IMR-90 (cell line): ENCODE measurements at regions of chr12 and their contacts with region 1.

Region 1: DNA sequence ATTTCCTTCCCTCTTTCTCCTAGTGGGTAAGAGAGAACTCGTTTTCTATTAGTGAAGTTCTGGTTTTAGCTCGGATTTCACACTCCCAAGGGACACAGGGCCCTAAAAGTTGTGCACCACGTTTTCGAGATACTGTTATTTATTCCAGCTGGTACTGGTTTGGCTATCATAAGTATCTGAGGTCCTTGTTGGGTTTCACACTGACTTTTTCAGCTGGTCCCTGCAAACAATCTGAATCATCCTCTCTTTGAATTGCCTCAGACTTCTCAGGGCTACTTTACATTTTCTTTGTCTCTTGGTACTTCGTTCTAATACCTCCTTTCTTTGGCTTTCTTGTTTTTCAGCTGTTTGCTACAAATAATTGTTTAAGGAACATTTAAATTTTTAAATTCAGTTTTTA is 75.7 kb downstream of the SCN8A start:
- DNase-seq: peak; percentile 6
- ATAC-seq: no peak
- H3K4me3 ChIP-seq: no peak overlapping the region
- H3K27ac ChIP-seq: no peak overlapping the region
- H3K4me1 ChIP-seq: no peaks in the 10 kb centered on the region; the same call in none of the 2 replicates
- H3K27me3 ChIP-seq: no peaks in the 10 kb centered on the region
- CTCF ChIP-seq: no peak
- POLR2A ChIP-seq: no peak
- RAD21 ChIP-seq: no peak

Region 2: DNA sequence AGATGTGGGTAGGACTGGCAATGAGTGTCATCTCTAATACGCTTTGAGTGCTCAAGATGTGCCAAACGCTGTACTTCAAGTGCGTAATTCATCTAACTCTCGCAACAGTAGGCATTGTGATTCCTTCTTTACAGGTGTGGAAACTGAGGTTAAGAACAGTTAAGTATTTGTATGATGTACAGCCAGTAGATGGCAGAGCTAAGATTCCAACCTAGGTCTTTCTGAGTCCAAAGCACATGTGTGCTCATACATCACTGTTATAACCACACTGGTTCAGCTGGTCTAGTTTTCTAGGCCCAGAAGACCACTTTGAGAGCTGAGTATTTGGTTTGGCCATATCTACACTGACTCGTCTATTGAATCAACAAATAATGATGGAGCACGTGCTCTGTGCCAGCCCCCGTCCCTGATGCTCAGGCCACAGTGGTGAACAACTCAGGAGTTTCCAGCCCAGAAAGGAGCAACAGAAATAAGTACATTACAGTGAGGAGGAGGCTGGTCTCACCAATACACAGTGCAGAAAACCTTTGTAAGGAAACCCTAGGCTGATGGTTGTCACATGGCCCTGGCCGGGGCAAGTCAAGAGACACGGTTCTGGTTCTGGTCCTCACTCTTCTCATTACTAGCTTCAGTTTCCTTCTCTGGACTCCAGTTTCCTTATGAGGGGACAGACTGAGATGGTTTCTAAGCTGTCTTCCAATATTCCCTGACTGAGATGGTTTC is 145.0 kb before region 1 on chr12:
- CTCF ChIA-PET with region 1: no interaction called
- POLR2A ChIA-PET with region 1: no interaction called
- dilution Hi-C with region 1: no loop called
- in situ Hi-C with region 1: no loop called
- intact Hi-C with region 1: no loop called
- DNase-seq: peak; percentile 29
- ATAC-seq: no peak
- H3K4me3 ChIP-seq: no peak overlapping the region
- H3K27ac ChIP-seq: no peak overlapping the region
- H3K4me1 ChIP-seq: no peaks in the 10 kb centered on the region
- H3K27me3 ChIP-seq: peaks cover 2% of the 10 kb centered on the region; the same call in 1 of the 2 replicates
- CTCF ChIP-seq: 0 out of 2 replicates have a peak, but pooled peaks have one; percentile 30
- POLR2A ChIP-seq: no peak
- RAD21 ChIP-seq: no peak

Region 3: GRCh38 chr12:51631591-51631990 is 35.1 kb before region 1 on chr12:
- CTCF ChIA-PET with region 1: no interaction called
- POLR2A ChIA-PET with region 1: no interaction called
- dilution Hi-C with region 1: no loop called
- in situ Hi-C with region 1: no loop called
- intact Hi-C with region 1: loop called (anchors 5 kb)
- DNase-seq: peak; percentile 82
- ATAC-seq: peak; percentile 93
- H3K4me3 ChIP-seq: no peak overlapping the region
- H3K27ac ChIP-seq: no peak overlapping the region
- H3K4me1 ChIP-seq: peaks cover 5% of the 10 kb centered on the region; the same call in 1 of the 2 replicates
- H3K27me3 ChIP-seq: no peaks in the 10 kb centered on the region
- CTCF ChIP-seq: no peak
- POLR2A ChIP-seq: no peak
- RAD21 ChIP-seq: no peak

Region 4: DNA sequence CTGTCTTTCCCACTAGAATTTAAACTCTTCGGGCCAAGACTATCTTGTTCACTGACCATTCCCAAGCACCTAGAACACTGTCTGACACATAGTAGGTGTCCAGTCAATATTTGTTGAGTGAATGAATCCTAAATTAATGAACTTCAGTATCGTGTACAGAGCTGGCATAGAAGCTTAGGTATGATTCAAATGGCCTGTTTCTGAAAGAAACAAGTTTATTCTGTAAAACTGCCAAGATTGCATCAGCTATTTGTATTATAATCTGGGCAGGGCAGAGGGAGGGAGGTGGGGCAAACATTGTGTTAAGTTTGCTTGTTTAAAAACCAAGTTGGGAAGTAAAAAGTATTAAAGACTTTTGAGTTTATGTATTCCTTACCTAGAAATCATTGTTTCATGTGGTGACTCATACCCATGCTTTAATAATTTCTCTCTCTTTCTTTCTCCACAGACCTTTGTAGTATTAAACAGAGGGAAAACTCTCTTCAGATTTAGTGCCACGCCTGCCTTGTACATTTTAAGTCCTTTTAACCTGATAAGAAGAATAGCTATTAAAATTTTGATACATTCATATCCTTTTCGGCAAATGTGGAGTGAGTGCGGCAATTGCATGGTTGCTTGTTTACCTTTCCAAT is 17.1 kb after region 1 on chr12:
- CTCF ChIA-PET with region 1: no interaction called
- POLR2A ChIA-PET with region 1: no interaction called
- dilution Hi-C with region 1: no loop called
- in situ Hi-C with region 1: no loop called
- intact Hi-C with region 1: no loop called
- DNase-seq: peak; percentile 65
- ATAC-seq: peak; percentile 53
- H3K4me3 ChIP-seq: no peak overlapping the region
- H3K27ac ChIP-seq: no peak overlapping the region
- H3K4me1 ChIP-seq: peaks cover 4% of the 10 kb centered on the region; the same call in 1 of the 2 replicates
- H3K27me3 ChIP-seq: no peaks in the 10 kb centered on the region
- CTCF ChIP-seq: no peak
- POLR2A ChIP-seq: no peak
- RAD21 ChIP-seq: no peak

Region 5: GRCh38 chr12:51994959-51995358 is 328.3 kb after region 1 on chr12:
- CTCF ChIA-PET with region 1: no interaction called
- POLR2A ChIA-PET with region 1: no interaction called
- dilution Hi-C with region 1: no loop called
- in situ Hi-C with region 1: no loop called
- intact Hi-C with region 1: no loop called
- DNase-seq: peak; percentile 57
- ATAC-seq: peak; percentile 41
- H3K4me3 ChIP-seq: no peak overlapping the region
- H3K27ac ChIP-seq: no peak overlapping the region; the same call in 1 of the 2 replicates
- H3K4me1 ChIP-seq: peaks cover 11% of the 10 kb centered on the region
- H3K27me3 ChIP-seq: no peaks in the 10 kb centered on the region
- CTCF ChIP-seq: no peak
- POLR2A ChIP-seq: no peak
- RAD21 ChIP-seq: no peak

Region 6: DNA sequence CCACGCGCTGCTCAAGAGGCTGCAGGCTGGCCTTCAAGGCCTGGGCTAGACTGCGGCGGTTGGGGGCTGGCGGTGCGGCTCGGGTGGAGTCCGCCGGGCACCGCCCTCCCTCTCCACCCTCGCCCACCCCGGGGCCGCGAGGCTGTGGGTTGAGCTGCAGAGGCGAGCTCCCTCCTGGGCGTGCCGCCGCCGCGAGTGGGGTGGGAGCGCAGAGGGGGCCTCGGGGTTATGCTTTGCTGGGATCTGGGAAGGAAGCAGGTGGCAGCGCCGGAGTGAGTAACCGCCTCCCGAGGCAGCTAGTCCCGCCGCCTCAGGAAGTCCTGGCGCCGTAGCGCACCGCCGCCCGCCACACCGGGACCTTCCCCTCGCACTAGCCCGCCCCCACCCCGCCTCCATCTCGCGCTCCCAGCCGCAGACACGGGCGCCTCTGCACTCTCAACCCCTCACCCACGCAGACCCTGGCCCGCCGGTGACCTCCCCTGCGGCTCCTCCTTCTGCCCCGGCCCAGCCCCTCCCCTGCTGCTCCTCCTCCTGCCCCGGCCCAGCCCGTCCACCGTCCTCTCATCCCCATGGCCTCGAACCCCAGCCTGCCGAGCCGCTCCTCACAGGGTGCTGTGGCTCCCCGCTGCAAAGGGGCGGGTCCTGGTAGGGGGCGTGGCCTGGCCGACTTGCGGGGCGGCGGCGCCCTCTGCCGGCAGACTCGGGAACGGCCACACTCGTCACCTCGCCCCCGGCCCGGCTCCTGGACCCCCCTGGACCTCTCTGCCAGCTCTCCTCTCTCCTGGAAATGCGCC is 356.7 kb after region 1 on chr12:
- CTCF ChIA-PET with region 1: no interaction called
- POLR2A ChIA-PET with region 1: no interaction called
- dilution Hi-C with region 1: no loop called
- in situ Hi-C with region 1: no loop called
- intact Hi-C with region 1: no loop called
- DNase-seq: peak; percentile 56
- ATAC-seq: peak; percentile 77
- H3K4me3 ChIP-seq: peak overlapping the region; percentile 52
- H3K27ac ChIP-seq: peak overlapping the region; percentile 41; the same call in 1 of the 2 replicates
- H3K4me1 ChIP-seq: peaks cover 6% of the 10 kb centered on the region; the same call in 1 of the 2 replicates
- H3K27me3 ChIP-seq: no peaks in the 10 kb centered on the region
- CTCF ChIP-seq: peak; percentile 96
- POLR2A ChIP-seq: no peak; the same call in none of the 2 replicates
- RAD21 ChIP-seq: peak; percentile 78